Left ventricle myocardium inferior (tissue), 1 donor: ENCODE measurements at regions of chr15 and their contacts with region 1.

Region 1: DNA sequence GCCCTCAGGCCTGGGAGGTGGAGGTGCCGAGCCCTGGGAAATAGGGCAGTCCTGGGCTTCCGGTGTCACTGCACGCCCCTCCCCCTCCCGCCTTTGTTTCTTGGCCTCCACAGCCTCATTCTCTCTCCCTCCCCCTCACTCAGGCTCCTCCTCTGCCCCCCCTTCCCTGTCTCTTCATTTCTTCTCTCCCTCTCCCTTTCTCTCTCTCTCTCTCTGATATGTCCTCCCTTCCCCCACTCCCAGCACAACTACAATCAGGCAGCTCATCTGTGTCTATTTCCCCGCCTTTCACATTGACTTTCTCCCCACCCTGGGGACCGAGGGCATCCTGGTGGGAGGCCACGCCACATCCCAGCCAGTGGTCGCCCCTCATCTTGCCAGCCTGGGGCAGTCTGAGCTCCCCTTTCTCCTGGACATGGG is 40.2 kb downstream of the IDH2 start:
- DNase-seq: peak; percentile 54
- H3K4me3 ChIP-seq: no peak overlapping the region
- H3K27ac ChIP-seq: peak overlapping the region; percentile 87
- H3K4me1 ChIP-seq: peaks cover 69% of the 10 kb centered on the region
- H3K27me3 ChIP-seq: no peaks in the 10 kb centered on the region
- CTCF ChIP-seq: no peak

Region 2: GRCh38 chr15:89999676-90000185 is 62.3 kb before region 1 on chr15:
- intact Hi-C with region 1: loop called (anchors 10 kb)
- DNase-seq: no peak
- H3K4me3 ChIP-seq: peak overlapping the region; percentile 94
- H3K27ac ChIP-seq: peak overlapping the region; percentile 84
- H3K4me1 ChIP-seq: peaks cover 47% of the 10 kb centered on the region
- H3K27me3 ChIP-seq: no peaks in the 10 kb centered on the region
- CTCF ChIP-seq: no peak